Sigmoid colon (tissue), 7 donors: ENCODE measurements at regions of chr13 and their contacts with region 1.

Region 1: DNA sequence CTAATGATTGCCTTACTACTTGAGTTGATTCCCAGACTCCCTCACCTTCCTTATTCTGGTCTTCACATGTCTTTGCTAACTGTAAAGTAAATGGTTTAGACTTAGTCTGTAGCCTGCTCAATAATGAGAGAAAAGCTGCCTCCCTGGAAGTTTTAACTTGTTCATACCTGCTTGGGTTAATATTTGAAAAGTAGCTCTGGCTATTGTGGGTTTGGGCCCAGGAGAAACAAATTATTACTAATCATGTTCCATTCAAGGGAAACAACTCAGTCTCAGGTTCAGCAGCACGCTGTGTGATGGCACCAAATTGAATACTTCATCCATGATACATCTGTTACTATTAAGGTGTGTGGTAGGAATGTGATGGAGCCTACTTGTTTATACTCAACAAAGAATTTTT is 75.0 kb downstream of the ZMYM2 start:
- DNase-seq: no peak
- H3K4me3 ChIP-seq: no peak overlapping the region
- H3K27ac ChIP-seq: no peak overlapping the region
- H3K4me1 ChIP-seq: no peaks in the 10 kb centered on the region
- H3K27me3 ChIP-seq: no peaks in the 10 kb centered on the region
- CTCF ChIP-seq: no peak
- EP300 ChIP-seq: no peak
- POLR2A ChIP-seq: no peak

Region 2: GRCh38 chr13:19967621-19968020 is 65.9 kb before region 1 on chr13:
- intact Hi-C with region 1: no loop called
- DNase-seq: no peak
- H3K4me3 ChIP-seq: no peak overlapping the region
- H3K27ac ChIP-seq: no peak overlapping the region
- H3K4me1 ChIP-seq: peaks cover 0 to 40% (median 26%) of the 10 kb centered on the region in 4 donors
- H3K27me3 ChIP-seq: no peaks in the 10 kb centered on the region
- CTCF ChIP-seq: no peak
- EP300 ChIP-seq: no peak
- POLR2A ChIP-seq: no peak

Region 3: GRCh38 chr13:19998960-19999359 is 34.5 kb before region 1 on chr13:
- intact Hi-C with region 1: loop called (anchors 5 kb)
- DNase-seq: no peak
- H3K4me3 ChIP-seq: no peak overlapping the region
- H3K27ac ChIP-seq: no peak overlapping the region
- H3K4me1 ChIP-seq: peaks cover 0 to 25% (median 2%) of the 10 kb centered on the region in 4 donors
- H3K27me3 ChIP-seq: no peaks in the 10 kb centered on the region
- CTCF ChIP-seq: no peak
- EP300 ChIP-seq: no peak
- POLR2A ChIP-seq: no peak

Region 4: GRCh38 chr13:21318891-21319532 is 1285.5 kb after region 1 on chr13:
- intact Hi-C with region 1: no loop called
- DNase-seq: no peak
- H3K4me3 ChIP-seq: peak overlapping the region; percentile 7 to 45 (median 40)
- H3K27ac ChIP-seq: peak overlapping the region in 2 of 4 donors; percentile 41
- H3K4me1 ChIP-seq: no peaks in the 10 kb centered on the region
- H3K27me3 ChIP-seq: no peaks in the 10 kb centered on the region
- CTCF ChIP-seq: no peak
- EP300 ChIP-seq: no peak
- POLR2A ChIP-seq: no peak